Naive thymus-derived CD4-positive, alpha-beta T cell (primary cell): ENCODE measurements at regions of chr9 and their contacts with region 1.

Region 1: GRCh38 chr9:96217754-96218693 is 84.0 kb downstream of the HSD17B3 start:
- DNase-seq: peak; percentile 40 to 86 (median 73)
- ATAC-seq: peak; percentile 93
- H3K4me3 ChIP-seq: peak overlapping the region; percentile 17
- H3K4me3 Mint-ChIP-seq: peak overlapping the region; percentile 65 to 89 (median 77)
- H3K27ac ChIP-seq: no peak overlapping the region
- H3K27ac Mint-ChIP-seq: peak overlapping the region in 6 of 9 donors; percentile 6 to 78 (median 56)
- H3K4me1 ChIP-seq: peaks cover 0 to 11% of the 10 kb centered on the region in 2 donors
- H3K4me1 Mint-ChIP-seq: peaks cover 0 to 22% (median 11%) of the 10 kb centered on the region in 7 donors
- H3K27me3 ChIP-seq: peaks cover 0 to 3% of the 10 kb centered on the region in 2 donors
- H3K27me3 Mint-ChIP-seq: peaks cover 17 to 56% (median 47%) of the 10 kb centered on the region in 5 donors

Region 2: DNA sequence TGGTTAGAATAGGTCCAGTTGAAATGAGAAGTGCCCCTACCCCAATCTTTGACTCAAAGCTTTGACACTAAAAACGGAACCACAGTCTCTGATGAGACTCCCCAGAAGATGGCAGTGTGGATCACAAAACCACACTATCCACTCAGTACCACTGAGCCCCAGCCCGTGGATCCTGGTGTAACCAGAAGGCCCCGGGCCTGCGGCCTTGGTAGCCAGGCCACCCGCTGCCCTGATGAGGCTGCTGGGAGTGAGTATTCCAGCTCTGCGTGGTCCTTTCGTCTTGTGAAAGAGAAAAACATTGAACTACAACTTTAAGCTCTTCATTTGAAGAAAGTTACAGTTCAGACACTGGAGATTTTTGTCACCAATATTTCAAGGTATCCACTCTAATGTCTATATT is 1536.5 kb before region 1 on chr9:
- CTCF ChIA-PET with region 1: interaction called, 4 read pairs
- POLR2A ChIA-PET with region 1: no interaction called
- intact Hi-C with region 1: loop called (anchors 1 to 5 kb)
- DNase-seq: peak; percentile 20 to 63 (median 52)
- ATAC-seq: peak; percentile 94
- H3K4me3 ChIP-seq: no peak overlapping the region
- H3K4me3 Mint-ChIP-seq: no peak overlapping the region
- H3K27ac ChIP-seq: no peak overlapping the region
- H3K27ac Mint-ChIP-seq: no peak overlapping the region
- H3K4me1 ChIP-seq: no peaks in the 10 kb centered on the region
- H3K4me1 Mint-ChIP-seq: no peaks in the 10 kb centered on the region
- H3K27me3 ChIP-seq: no peaks in the 10 kb centered on the region
- H3K27me3 Mint-ChIP-seq: peaks cover 0 to 47% (median 16%) of the 10 kb centered on the region in 5 donors

Region 3: DNA sequence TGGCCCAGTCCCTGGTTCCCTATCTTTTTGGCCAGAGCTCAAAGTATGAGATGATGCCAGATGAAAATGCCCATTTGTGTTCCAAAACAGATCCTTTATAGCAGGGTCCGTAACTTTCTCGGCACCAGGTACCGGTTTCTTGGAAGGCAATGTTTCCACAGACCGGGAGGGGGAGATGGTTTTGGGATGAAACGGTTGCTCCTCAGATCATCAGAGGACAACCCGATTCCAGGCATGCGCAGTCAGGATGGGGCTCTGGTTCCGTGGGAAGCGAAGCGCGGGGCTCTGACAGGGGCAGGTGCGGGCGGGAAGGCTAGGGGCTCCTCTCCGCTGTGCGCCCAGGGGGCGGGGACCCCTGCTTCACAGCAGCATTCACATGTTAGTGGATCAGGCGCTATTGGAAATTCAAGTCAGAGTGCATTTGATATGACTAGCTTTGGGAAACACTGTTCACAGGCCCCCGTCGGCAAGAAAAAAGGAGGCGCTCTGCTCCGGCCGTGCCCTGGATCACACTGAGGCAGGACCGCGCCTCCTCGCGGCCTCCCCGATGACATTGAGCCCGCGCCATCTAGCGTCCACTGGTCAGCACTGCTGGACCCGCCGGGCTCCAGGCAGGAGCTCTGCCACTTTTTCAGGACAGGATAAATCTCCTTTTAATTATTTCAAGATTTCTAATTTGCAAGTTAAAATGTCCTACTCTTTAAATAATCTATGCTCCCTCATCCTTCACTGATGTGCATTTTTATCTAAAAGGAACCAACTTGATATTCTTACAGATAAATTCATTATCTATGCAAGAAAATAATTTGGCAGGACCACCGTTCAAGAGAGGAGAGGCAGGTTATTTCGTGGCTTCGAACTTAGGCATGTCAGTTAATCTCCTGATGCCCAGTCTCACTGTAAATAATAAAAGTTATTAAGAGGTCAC is 1090.5 kb before region 1 on chr9:
- CTCF ChIA-PET with region 1: interaction called, 6 read pairs
- POLR2A ChIA-PET with region 1: no interaction called
- intact Hi-C with region 1: loop called in 1 of 2 experiments (anchors 5 kb)
- DNase-seq: peak; percentile 23 to 75 (median 56)
- ATAC-seq: peak; percentile 94
- H3K4me3 ChIP-seq: no peak overlapping the region
- H3K4me3 Mint-ChIP-seq: peak overlapping the region in 1 of 10 donors; percentile 46
- H3K27ac ChIP-seq: no peak overlapping the region
- H3K27ac Mint-ChIP-seq: no peak overlapping the region
- H3K4me1 ChIP-seq: no peaks in the 10 kb centered on the region
- H3K4me1 Mint-ChIP-seq: peaks cover 0 to 8% (median 4%) of the 10 kb centered on the region in 7 donors
- H3K27me3 ChIP-seq: no peaks in the 10 kb centered on the region
- H3K27me3 Mint-ChIP-seq: no peaks in the 10 kb centered on the region

Region 4: DNA sequence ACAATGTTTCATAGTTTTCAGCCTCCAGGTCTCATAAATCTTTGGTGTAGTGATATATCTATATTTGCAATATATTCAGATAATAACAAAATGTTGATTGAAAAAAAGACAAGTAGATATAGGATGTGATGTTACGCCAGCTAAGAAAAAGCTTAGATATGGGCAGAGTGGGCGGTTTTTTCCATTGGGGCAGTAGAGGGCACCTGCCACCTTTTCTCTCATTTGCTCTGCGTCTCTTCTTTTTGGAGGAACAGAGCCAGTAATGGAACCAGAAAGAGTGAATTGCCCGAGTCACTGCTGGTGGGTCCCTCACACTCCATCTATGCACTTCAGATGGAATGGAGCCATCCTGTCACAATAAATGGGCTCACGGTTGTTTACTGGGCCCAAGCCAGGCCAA is 838.4 kb before region 1 on chr9:
- CTCF ChIA-PET with region 1: interaction called, 3 read pairs
- POLR2A ChIA-PET with region 1: no interaction called
- intact Hi-C with region 1: loop called (anchors 1 kb)
- DNase-seq: peak in 7 of 9 donors; percentile 10 to 50 (median 42)
- ATAC-seq: no peak
- H3K4me3 ChIP-seq: no peak overlapping the region
- H3K4me3 Mint-ChIP-seq: no peak overlapping the region
- H3K27ac ChIP-seq: no peak overlapping the region
- H3K27ac Mint-ChIP-seq: no peak overlapping the region
- H3K4me1 ChIP-seq: no peaks in the 10 kb centered on the region
- H3K4me1 Mint-ChIP-seq: peaks cover 0 to 11% (median 0%) of the 10 kb centered on the region in 7 donors
- H3K27me3 ChIP-seq: no peaks in the 10 kb centered on the region
- H3K27me3 Mint-ChIP-seq: peaks cover 25 to 42% (median 31%) of the 10 kb centered on the region in 5 donors

Region 5: DNA sequence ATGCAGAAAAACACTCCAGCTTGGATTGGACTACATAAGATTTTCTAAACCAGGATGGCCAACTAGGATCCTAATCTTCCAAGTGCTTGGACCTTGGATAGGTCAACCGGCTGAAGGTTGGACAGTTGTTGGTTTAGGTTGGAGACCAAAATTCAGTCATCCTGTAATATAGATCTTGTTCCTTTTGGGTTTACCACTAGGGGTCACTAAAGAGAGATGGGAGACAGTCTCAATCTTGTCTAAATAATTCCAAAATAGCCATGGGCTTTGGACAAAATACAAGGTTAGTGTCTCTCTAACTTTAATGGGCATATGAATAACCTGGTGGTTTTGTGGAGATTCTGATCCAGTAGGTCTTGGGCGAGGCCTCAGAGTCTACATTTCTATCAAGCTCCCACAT is 491.3 kb before region 1 on chr9:
- CTCF ChIA-PET with region 1: no interaction called
- POLR2A ChIA-PET with region 1: no interaction called
- intact Hi-C with region 1: loop called (anchors 5 kb)
- DNase-seq: peak in 1 of 9 donors; percentile 31
- ATAC-seq: no peak
- H3K4me3 ChIP-seq: no peak overlapping the region
- H3K4me3 Mint-ChIP-seq: peak overlapping the region in 1 of 10 donors; percentile 20
- H3K27ac ChIP-seq: no peak overlapping the region
- H3K27ac Mint-ChIP-seq: no peak overlapping the region
- H3K4me1 ChIP-seq: peaks cover 18 to 24% of the 10 kb centered on the region in 2 donors
- H3K4me1 Mint-ChIP-seq: peaks cover 33 to 58% (median 49%) of the 10 kb centered on the region in 7 donors
- H3K27me3 ChIP-seq: no peaks in the 10 kb centered on the region
- H3K27me3 Mint-ChIP-seq: peaks cover 0 to 31% (median 0%) of the 10 kb centered on the region in 5 donors

Region 6: DNA sequence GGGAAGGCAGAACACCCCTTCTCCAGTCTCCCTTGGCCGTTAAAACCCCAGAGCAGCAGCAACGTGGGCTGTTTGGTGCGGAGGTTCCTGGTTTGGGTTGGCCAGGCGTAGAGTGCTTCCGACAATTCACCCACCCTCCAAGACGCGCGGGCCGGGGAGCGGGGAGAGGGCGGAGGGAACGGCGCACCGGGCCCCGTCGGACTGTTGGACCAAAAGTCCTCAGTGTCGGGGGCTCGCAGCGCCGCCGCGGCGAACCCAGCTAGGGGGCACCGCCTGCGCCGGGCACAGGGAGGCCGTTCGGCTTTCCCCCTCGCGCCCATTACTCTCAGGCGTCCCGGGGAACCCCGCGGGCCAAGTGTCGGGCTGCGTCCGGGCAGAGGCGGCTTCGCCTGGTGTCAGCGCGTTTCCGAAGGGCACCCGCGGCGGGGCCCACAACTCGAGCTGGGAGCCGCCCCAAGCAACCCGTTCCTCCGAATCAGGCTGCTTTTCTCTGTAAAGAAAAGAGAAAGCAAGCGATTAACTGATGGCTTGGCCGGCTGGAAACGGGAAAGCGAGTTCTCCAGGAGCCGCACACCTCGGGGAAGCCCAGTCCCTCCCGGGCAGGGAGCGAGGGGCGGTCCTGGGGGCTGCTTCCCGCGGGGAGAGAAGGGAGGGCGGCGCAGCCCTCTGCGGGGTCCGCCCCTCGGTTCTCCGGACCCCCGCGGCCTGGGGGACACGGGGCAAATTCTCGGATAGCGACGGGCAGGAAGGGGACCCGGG is 197.1 kb before region 1 on chr9:
- CTCF ChIA-PET with region 1: no interaction called
- POLR2A ChIA-PET with region 1: no interaction called
- intact Hi-C with region 1: loop called in 1 of 2 experiments (anchors 5 kb)
- DNase-seq: peak in 8 of 9 donors; percentile 35 to 70 (median 44)
- ATAC-seq: peak; percentile 70
- H3K4me3 ChIP-seq: peak overlapping the region; percentile 61
- H3K4me3 Mint-ChIP-seq: peak overlapping the region; percentile 71 to 91 (median 86)
- H3K27ac ChIP-seq: peak overlapping the region; percentile 72
- H3K27ac Mint-ChIP-seq: peak overlapping the region; percentile 28 to 97 (median 70)
- H3K4me1 ChIP-seq: peaks cover 27 to 34% of the 10 kb centered on the region in 2 donors
- H3K4me1 Mint-ChIP-seq: peaks cover 47 to 74% (median 63%) of the 10 kb centered on the region in 7 donors
- H3K27me3 ChIP-seq: no peaks in the 10 kb centered on the region
- H3K27me3 Mint-ChIP-seq: peaks cover 0 to 31% (median 5%) of the 10 kb centered on the region in 5 donors

Region 7: GRCh38 chr9:96279960-96280359 is 61.9 kb after region 1 on chr9:
- CTCF ChIA-PET with region 1: no interaction called
- POLR2A ChIA-PET with region 1: no interaction called
- intact Hi-C with region 1: no loop called
- DNase-seq: no peak
- ATAC-seq: no peak
- H3K4me3 ChIP-seq: no peak overlapping the region
- H3K4me3 Mint-ChIP-seq: no peak overlapping the region
- H3K27ac ChIP-seq: no peak overlapping the region
- H3K27ac Mint-ChIP-seq: no peak overlapping the region
- H3K4me1 ChIP-seq: no peaks in the 10 kb centered on the region
- H3K4me1 Mint-ChIP-seq: no peaks in the 10 kb centered on the region
- H3K27me3 ChIP-seq: no peaks in the 10 kb centered on the region
- H3K27me3 Mint-ChIP-seq: peaks cover 0 to 10% (median 8%) of the 10 kb centered on the region in 5 donors